H1 (cell line): ENCODE measurements at regions of chr3 and their contacts with region 1.

Region 1: GRCh38 chr3:28726840-28727239 is 378.2 kb upstream of the AZI2 start:
- DNase-seq: peak; percentile 56 to 69
- H3K4me3 ChIP-seq: no peak overlapping the region
- H3K27ac ChIP-seq: no peak overlapping the region
- H3K4me1 ChIP-seq: no peaks in the 10 kb centered on the region
- H3K27me3 ChIP-seq: no peaks in the 10 kb centered on the region
- CTCF ChIP-seq: peak; percentile 32 to 79 (median 77)
- EP300 ChIP-seq: no peak
- POLR2A ChIP-seq: no peak
- RAD21 ChIP-seq: peak; percentile 85 to 90

Region 2: DNA sequence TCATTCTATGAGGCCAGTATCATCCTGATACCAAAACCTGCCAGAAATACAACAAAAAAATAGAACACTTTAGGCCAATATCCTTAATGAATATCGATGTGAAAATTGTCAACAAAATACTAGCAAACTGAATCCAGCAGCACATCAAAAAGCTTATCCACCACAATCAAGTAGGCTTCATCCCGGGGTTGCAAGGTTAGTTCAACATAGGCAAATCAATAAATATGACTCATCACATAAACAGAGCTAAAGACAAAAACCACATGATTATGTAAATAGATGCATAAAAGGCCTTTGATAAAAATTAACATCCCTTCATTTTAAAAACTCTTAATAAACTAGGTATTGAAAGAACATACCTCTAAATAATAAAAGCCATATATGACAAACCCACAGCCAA is 25.0 kb after region 1 on chr3:
- CTCF ChIA-PET with region 1: interaction called, 12 read pairs
- POLR2A ChIA-PET with region 1: no interaction called
- DNase-seq: no peak
- H3K4me3 ChIP-seq: no peak overlapping the region
- H3K27ac ChIP-seq: no peak overlapping the region
- H3K4me1 ChIP-seq: no peaks in the 10 kb centered on the region
- H3K27me3 ChIP-seq: no peaks in the 10 kb centered on the region
- CTCF ChIP-seq: no peak
- EP300 ChIP-seq: no peak
- POLR2A ChIP-seq: no peak
- RAD21 ChIP-seq: no peak